Posterior vena cava (tissue), 2 donors: ENCODE measurements at regions of chr5 and their contacts with region 1.

Region 1: DNA sequence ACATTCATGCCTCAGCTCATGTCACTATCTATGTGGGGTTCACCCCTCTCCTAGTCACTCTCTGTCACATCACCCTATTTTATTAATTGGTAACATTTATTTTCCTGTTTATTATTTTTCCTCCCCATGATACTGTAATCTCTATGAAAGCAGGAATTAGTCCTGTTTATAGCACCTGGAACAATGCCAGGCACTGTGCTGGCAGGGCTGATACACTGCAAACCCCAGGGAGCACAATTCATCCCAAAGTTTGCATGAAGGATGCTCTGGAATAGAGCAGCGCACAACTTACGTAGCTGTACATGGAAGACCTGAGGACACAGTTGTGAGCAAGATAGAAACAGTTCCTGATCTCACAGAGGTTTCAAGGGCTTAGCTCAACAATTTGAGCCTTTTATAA is 103.2 kb downstream of the NSG2 start:
- DNase-seq: no peak

Region 2: DNA sequence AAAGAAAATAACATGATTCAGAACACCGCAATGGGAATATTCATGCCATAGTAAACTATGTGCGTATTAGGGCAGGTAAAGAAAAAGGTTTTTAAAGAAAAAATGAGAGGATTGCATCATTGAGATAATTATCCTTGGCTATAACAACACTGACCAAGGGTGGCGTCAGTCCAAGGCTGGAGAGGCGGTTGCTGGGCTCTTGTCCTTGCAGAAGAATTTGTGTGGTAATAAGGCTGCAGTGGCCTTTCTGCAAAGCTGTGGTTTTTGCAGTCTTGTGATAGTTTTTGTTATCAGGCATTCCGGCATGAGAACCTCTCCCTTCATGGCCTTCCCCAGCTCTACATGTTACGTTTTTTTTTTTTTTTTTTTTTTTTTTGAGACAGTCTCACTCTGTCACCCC is 546.3 kb before region 1 on chr5:
- intact Hi-C with region 1: no loop called
- DNase-seq: peak; percentile 92

Region 3: DNA sequence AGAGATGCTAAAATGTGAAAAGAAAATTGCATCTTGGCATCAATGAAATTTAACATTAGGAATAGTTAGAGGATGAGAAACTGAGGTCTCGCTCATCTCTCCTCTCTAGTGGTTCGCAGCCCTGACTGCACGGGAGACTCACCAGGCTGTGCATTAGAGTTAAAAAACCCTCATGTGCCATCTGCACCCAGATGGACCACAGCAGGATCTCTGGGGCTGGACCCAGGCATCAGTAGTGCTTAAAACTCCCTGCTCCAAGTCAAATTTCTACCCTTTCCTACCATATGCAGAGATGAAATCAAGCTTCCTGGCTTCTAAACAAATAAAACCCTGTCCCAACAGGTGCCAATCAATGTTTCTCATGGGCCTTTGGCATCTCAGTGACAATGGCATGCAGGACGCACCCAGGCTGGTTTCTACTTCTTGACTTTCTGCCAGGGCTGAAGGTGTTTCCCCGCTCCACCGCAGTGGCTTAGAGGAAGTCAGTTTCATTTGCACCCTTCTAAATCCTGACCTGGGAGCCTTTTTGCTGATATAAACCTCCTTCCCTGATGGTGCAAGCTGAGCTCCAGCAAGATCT is 29.3 kb after region 1 on chr5:
- intact Hi-C with region 1: loop called in 1 of 2 experiments (anchors 1 kb)
- DNase-seq: no peak